ENCODE measurements at regions of chr18 and their contacts with region 1.

Region 1: DNA sequence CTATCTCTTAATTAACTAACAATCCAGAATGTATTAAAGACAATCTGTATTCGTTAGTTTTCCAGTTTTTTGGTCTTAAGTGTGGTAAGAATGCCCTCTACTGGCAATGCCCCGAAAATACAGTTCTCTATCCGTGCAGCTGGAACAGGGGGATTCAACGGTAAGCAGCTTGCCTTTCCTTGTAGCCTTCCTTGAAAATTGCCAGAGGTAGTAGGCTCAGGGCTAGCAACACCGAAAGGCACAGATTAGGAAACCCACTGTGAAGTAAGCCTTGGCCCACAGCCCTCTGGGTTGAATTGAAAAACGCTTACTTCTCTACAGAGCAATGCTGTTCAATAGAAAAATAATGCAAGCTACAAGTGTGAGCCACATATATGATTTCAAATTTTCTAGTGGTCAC is 17.1 kb upstream of the VPS4B start:
- DNase-seq: peak; percentile 37
- H3K4me3 ChIP-seq: no peak overlapping the region
- H3K27ac ChIP-seq: no peak overlapping the region
- H3K4me1 ChIP-seq: no peaks in the 10 kb centered on the region
- H3K27me3 ChIP-seq: no peaks in the 10 kb centered on the region
- CTCF ChIP-seq: peak; percentile 45 to 77 (median 63)
- POLR2A ChIP-seq: no peak

Region 2: DNA sequence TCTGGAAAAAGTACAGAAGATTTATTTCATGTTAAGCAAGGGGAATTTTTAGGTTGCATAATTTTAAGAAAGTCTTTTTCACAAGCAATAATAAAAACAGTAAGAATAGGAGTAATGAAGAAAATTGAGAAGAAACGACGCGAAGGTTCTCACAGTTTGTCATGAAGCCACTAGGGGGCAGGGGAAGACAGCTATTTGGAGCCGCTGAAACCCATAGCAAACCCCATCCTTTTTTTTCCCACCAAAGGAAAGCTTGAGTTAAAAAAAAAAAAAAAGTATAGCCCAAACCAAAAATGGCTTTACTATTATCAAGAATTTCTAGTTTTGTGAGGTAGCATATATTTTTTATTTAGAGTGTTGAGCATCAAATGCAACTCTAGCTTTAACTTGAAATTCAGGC is 423.1 kb before region 1 on chr18:
- intact Hi-C with region 1: loop called (anchors 5 kb)
- DNase-seq: peak; percentile 28
- H3K4me3 ChIP-seq: no peak overlapping the region
- H3K27ac ChIP-seq: no peak overlapping the region
- H3K4me1 ChIP-seq: no peaks in the 10 kb centered on the region
- H3K27me3 ChIP-seq: no peaks in the 10 kb centered on the region
- CTCF ChIP-seq: peak; percentile 63 to 76 (median 72)
- POLR2A ChIP-seq: no peak

Measured in prostate gland (tissue), 2 donors.